ENCODE measurements at regions of chr16 and their contacts with region 1.

Region 1: GRCh38 chr16:88077328-88078108 is 126.3 kb downstream of the BANP start:
- DNase-seq: peak; percentile 57
- ATAC-seq: peak; percentile 46 to 49

Region 2: GRCh38 chr16:88144028-88144511 is 66.6 kb after region 1 on chr16:
- intact Hi-C with region 1: loop called in 1 of 2 experiments (anchors 5 kb)
- DNase-seq: peak; percentile 72
- ATAC-seq: peak; percentile 60 to 86

Measured in left cardiac atrium (tissue), 4 donors.